Activated CD4-positive, alpha-beta T cell treated with anti-CD3 and anti-CD28 coated beads, Interleukin-2, amount 10 ng/mL, durations not matched to agents 24 days and 14 days (primary cell): ENCODE measurements at regions of chr1 and their contacts with region 1.

Region 1: GRCh38 chr1:61332196-61332753 is 249.9 kb downstream of the NFIA start:
- DNase-seq: peak; percentile 66
- H3K4me3 Mint-ChIP-seq: peak overlapping the region; percentile 3
- H3K27ac Mint-ChIP-seq: peak overlapping the region; percentile 83
- H3K4me1 Mint-ChIP-seq: peaks cover 15% of the 10 kb centered on the region
- H3K27me3 Mint-ChIP-seq: peaks cover 20% of the 10 kb centered on the region

Region 2: GRCh38 chr1:60461925-60462595 is 870.2 kb before region 1 on chr1:
- intact Hi-C with region 1: no loop called
- DNase-seq: no peak
- H3K4me3 Mint-ChIP-seq: no peak overlapping the region
- H3K27ac Mint-ChIP-seq: no peak overlapping the region
- H3K4me1 Mint-ChIP-seq: no peaks in the 10 kb centered on the region
- H3K27me3 Mint-ChIP-seq: no peaks in the 10 kb centered on the region

Region 3: DNA sequence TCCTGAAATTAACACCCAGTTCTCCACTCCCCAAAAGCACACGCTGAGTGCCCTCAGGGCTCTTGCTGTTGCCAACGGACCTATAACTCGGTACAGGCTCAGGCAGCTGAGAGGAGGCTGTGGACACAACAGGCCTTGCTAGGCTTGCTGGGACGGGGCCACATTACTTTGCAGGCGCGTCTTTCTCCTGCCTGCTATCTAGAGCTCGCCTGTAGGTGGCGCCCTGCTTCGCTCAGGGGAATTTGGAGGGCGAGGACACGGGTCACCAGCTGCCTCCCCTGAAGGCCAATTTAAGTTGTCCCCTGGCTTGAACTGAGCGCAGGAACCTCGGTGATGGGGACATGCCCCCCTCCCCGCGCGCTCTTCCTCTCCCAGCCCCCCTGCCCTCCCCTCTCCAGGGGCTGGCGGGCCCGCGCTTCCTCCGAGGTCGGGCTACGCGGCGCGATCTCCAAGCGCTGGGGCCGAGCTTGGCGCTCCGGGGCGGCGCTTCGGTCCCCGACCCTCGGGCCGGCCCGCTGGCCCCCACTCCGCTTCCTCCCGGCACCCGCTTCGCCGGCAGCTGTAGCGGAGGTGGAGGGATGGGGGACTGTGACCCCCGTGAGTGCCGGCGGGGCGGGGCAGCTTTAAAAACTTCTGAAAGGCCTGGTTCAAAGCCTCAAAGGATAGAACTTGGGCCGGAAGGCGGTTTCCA is 282.3 kb before region 1 on chr1:
- intact Hi-C with region 1: loop called (anchors 5 kb)
- DNase-seq: peak; percentile 96
- H3K4me3 Mint-ChIP-seq: peak overlapping the region; percentile 76
- H3K27ac Mint-ChIP-seq: no peak overlapping the region
- H3K4me1 Mint-ChIP-seq: peaks cover 17% of the 10 kb centered on the region
- H3K27me3 Mint-ChIP-seq: peaks cover 57% of the 10 kb centered on the region

Region 4: DNA sequence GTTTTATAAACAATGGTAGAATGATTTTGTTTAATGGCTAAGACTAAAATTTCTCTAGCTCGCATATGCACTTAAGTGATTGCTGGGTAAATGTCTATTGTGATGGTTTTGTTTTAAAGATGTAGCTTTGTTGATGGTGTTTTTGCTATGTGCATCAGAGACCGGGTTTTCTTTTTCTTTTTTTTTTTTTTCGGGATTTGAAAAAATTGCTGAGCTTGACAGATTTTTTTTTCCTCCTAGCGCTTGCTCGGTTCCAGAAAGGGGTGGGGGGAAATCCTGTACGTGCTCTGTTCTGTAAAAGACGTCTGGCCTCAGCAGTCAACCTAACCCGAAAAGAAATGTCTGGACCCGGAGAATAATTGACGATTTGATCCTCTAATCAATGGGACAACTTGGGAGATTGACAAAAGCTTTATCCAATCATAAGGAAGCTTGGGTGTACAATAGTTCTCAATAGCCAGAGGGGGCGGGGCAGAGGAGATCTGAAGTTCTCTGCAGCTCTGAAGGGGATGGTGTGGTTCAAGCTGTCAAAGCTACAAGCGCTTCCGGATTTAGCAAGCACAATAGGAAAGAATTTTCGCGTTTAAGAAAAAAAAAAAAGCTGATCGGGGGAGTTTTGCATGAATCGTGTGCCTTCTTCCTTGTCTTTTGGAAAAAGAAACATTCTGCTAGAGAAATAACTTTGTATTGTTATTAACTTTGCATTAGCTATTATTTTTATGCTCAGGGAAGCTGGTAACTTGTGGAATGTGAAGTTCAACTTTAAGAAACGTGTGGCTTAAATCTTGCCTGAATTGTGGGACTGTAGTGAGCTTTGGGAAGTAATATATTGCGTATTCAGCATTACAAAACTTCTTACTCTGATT is 254.4 kb before region 1 on chr1:
- intact Hi-C with region 1: loop called (anchors 5 kb)
- DNase-seq: peak; percentile 96
- H3K4me3 Mint-ChIP-seq: peak overlapping the region; percentile 92
- H3K27ac Mint-ChIP-seq: peak overlapping the region; percentile 86
- H3K4me1 Mint-ChIP-seq: peaks cover 39% of the 10 kb centered on the region
- H3K27me3 Mint-ChIP-seq: peaks cover 50% of the 10 kb centered on the region

Region 5: DNA sequence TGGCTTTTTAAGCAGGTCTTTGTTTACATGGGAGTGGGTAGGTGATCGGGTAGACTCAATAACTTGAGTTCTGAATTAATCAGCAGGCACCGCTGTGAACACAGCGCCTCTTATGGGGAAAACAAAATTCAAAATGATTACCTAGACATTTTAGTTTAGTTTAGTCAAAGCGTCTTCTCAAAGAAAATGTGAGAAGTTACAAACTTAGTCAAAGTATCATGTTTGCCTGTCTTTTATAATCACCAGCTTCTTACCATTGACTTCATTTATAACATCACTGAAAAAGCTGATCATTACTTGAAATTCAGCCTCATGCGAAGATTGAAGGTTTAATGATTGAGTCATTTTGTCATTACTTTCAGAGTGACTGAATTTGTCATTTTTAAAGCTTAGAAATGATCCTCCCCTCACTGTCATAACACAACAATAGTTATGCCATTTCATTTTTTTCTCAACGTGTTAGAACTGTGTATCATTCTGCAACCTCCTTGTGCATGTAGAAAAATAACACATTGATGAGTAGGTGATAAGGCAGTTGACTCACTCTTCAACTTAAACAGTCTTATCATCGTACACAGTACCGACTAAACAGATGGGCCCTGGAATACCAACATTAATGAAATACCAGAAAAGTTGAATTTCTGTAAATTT is 61.4 kb before region 1 on chr1:
- intact Hi-C with region 1: loop called (anchors 2 kb)
- DNase-seq: no peak
- H3K4me3 Mint-ChIP-seq: no peak overlapping the region
- H3K27ac Mint-ChIP-seq: peak overlapping the region; percentile 57
- H3K4me1 Mint-ChIP-seq: no peaks in the 10 kb centered on the region
- H3K27me3 Mint-ChIP-seq: peaks cover 8% of the 10 kb centered on the region

Region 6: GRCh38 chr1:61301824-61302657 is 30.2 kb before region 1 on chr1:
- intact Hi-C with region 1: loop called (anchors 1 kb)
- DNase-seq: peak; percentile 67
- H3K4me3 Mint-ChIP-seq: peak overlapping the region; percentile 36
- H3K27ac Mint-ChIP-seq: peak overlapping the region; percentile 87
- H3K4me1 Mint-ChIP-seq: peaks cover 26% of the 10 kb centered on the region
- H3K27me3 Mint-ChIP-seq: peaks cover 4% of the 10 kb centered on the region

Region 7: GRCh38 chr1:61352845-61353435 is 20.7 kb after region 1 on chr1:
- intact Hi-C with region 1: no loop called
- DNase-seq: no peak
- H3K4me3 Mint-ChIP-seq: no peak overlapping the region
- H3K27ac Mint-ChIP-seq: no peak overlapping the region
- H3K4me1 Mint-ChIP-seq: no peaks in the 10 kb centered on the region
- H3K27me3 Mint-ChIP-seq: peaks cover 12% of the 10 kb centered on the region